ENCODE measurements at regions of chr3 and their contacts with region 1.

Region 1: GRCh38 chr3:179591313-179591712 is 13.1 kb downstream of the MRPL47 start:
- DNase-seq: no peak
- ATAC-seq: no peak
- H3K4me3 ChIP-seq: no peak overlapping the region
- H3K27ac ChIP-seq: no peak overlapping the region
- H3K4me1 ChIP-seq: no peaks in the 10 kb centered on the region
- H3K27me3 ChIP-seq: no peaks in the 10 kb centered on the region
- CTCF ChIP-seq: no peak
- POLR2A ChIP-seq: no peak

Region 2: GRCh38 chr3:178915365-178915764 is 675.9 kb before region 1 on chr3:
- intact Hi-C with region 1: no loop called
- DNase-seq: no peak
- ATAC-seq: no peak
- H3K4me3 ChIP-seq: no peak overlapping the region
- H3K27ac ChIP-seq: no peak overlapping the region
- H3K4me1 ChIP-seq: no peaks in the 10 kb centered on the region
- H3K27me3 ChIP-seq: no peaks in the 10 kb centered on the region
- CTCF ChIP-seq: no peak
- POLR2A ChIP-seq: no peak

Region 3: GRCh38 chr3:179063945-179064560 is 527.3 kb before region 1 on chr3:
- intact Hi-C with region 1: no loop called
- DNase-seq: no peak
- ATAC-seq: no peak
- H3K4me3 ChIP-seq: no peak overlapping the region
- H3K27ac ChIP-seq: no peak overlapping the region
- H3K4me1 ChIP-seq: peaks cover 12% of the 10 kb centered on the region
- H3K27me3 ChIP-seq: no peaks in the 10 kb centered on the region
- CTCF ChIP-seq: no peak
- POLR2A ChIP-seq: no peak

Region 4: DNA sequence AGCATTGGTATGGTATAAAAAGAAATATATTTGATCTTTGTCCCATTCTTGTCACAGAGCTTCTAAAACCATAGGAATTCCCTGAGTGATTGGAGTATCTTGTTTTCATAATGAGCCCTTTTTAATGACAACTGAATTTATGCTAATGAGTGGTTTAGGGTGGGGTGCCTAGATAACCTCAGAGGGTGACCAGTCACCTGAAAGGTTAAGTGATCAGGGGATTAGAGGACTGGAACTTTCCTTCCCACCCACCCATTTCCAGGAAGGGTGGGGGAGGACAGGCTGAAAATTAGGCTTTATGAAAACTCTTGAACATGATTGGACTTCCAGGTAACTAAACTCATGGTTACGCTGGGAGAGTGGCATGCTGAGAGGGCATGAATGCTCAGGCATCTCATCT is 235.3 kb before region 1 on chr3:
- intact Hi-C with region 1: loop called (anchors 10 kb)
- DNase-seq: no peak
- ATAC-seq: no peak
- H3K4me3 ChIP-seq: no peak overlapping the region
- H3K27ac ChIP-seq: no peak overlapping the region
- H3K4me1 ChIP-seq: no peaks in the 10 kb centered on the region
- H3K27me3 ChIP-seq: no peaks in the 10 kb centered on the region
- CTCF ChIP-seq: no peak
- POLR2A ChIP-seq: no peak

Measured in body of pancreas (tissue), 4 donors.